PC-3 (cell line): ENCODE measurements at regions of chr3 and their contacts with region 1.

Region 1: GRCh38 chr3:37349640-37350039 is 175.3 kb upstream of the LRRFIP2 start:
- DNase-seq: no peak
- ATAC-seq: no peak
- H3K4me3 ChIP-seq: no peak overlapping the region
- H3K27ac ChIP-seq: no peak overlapping the region
- H3K4me1 ChIP-seq: peaks cover 6% of the 10 kb centered on the region
- H3K27me3 ChIP-seq: no peaks in the 10 kb centered on the region
- CTCF ChIP-seq: no peak

Region 2: DNA sequence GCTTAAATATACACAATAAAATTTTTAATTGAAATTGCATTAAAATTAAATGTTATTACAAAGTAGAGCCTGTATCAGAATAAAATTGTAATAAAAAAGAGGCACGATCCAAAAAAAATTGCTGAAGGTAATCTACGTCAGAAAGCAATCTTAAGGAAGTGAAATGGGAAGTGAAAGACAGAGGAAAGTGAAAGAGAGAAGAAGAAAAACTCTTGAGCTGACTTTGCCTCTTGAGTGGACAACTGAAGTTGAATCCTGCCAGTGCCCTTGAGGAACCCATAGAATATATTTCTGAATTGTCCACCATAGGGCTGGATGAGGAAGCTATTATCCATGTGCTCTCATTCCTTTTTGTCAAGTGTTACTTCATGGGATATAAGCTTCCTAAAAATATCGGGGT is 1254.4 kb before region 1 on chr3:
- CTCF ChIA-PET with region 1: no interaction called
- POLR2A ChIA-PET with region 1: no interaction called
- intact Hi-C with region 1: loop called (anchors 10 kb)
- DNase-seq: no peak
- ATAC-seq: no peak
- H3K4me3 ChIP-seq: no peak overlapping the region
- H3K27ac ChIP-seq: no peak overlapping the region
- H3K4me1 ChIP-seq: no peaks in the 10 kb centered on the region
- H3K27me3 ChIP-seq: peaks cover 20% of the 10 kb centered on the region
- CTCF ChIP-seq: no peak